OCI-LY7 (cell line): ENCODE measurements at regions of chr12 and their contacts with region 1.

Region 1: GRCh38 chr12:1093166-1093751 is 102.2 kb downstream of the ERC1 start:
- DNase-seq: peak; percentile 72
- H3K4me3 ChIP-seq: no peak overlapping the region
- H3K27ac ChIP-seq: no peak overlapping the region
- H3K4me1 ChIP-seq: no peaks in the 10 kb centered on the region
- CTCF ChIP-seq: peak; percentile 89

Region 2: DNA sequence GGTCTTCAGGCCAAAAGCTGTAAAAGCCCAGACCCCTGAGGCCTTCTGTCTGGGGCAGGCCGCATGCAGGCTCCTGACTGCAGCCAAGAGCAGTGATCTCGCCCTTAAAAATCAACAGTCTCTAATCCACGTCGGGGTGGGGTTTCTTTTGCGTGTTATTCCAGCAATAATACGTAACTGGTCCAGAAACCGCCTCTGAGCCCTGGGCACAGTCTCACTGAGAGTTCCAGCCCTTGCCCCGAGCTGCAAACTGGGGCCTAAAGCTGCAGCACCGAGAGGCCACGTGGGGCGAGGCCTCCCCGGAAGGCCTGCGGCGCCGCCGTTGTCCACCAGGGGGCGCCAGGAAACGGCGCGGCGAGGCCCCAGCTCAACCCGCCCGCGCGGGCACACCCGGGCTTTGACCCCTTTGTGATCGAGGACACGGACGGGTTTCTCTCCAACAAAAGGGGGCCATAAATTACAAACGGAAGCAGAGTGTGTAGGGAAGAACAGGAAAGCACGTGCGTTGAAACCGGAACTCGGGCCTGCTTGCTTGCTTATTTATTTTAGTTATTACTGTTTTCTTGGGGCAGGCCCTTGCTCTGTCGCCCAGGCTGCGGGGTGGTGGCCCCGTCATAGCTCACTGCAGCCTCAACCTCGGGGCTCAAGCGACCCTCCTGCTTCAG is 517.2 kb before region 1 on chr12:
- CTCF ChIA-PET with region 1: no interaction called
- POLR2A ChIA-PET with region 1: no interaction called
- intact Hi-C with region 1: loop called (anchors 10 kb)
- DNase-seq: peak; percentile 87
- H3K4me3 ChIP-seq: no peak overlapping the region
- H3K27ac ChIP-seq: no peak overlapping the region
- H3K4me1 ChIP-seq: peaks cover 13% of the 10 kb centered on the region
- CTCF ChIP-seq: peak; percentile 98

Region 3: DNA sequence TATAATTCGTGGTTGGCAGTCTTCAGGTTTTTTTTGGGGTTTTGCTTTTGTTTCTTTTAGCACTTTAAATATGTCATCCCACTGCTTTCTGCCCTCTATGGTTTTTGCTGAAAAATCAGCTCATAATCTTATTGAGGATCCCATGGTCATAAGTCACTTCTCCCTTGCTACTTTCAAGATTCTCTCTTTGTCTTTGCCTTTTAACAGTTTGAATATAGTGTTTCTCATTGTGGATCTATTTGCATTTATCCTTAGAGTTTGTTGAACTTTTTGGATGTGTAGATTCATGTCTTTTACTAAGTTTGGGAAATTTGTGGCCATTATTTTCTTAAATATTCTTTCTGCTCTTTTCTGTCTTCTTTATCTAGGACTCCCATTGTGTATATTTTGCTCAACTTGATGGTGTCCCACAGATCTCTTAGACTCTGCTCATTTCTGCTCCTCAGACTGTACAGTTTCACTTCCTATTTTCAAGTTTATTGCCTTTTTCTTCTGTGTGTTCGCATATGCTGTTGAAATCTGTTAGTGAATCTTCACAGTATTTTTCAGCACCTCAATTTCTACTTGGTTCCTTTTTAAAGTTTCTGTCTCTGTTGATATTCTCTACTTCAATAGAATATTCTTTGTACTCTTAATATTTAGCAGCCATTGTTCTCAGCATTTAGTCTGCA is 270.1 kb before region 1 on chr12:
- CTCF ChIA-PET with region 1: no interaction called
- POLR2A ChIA-PET with region 1: no interaction called
- intact Hi-C with region 1: loop called (anchors 5 kb)
- DNase-seq: peak; percentile 84
- H3K4me3 ChIP-seq: peak overlapping the region; percentile 42
- H3K27ac ChIP-seq: peak overlapping the region; percentile 70
- H3K4me1 ChIP-seq: peaks cover 30% of the 10 kb centered on the region
- CTCF ChIP-seq: no peak